Natural killer cell (primary cell): ENCODE measurements at regions of chr17 and their contacts with region 1.

Region 1: DNA sequence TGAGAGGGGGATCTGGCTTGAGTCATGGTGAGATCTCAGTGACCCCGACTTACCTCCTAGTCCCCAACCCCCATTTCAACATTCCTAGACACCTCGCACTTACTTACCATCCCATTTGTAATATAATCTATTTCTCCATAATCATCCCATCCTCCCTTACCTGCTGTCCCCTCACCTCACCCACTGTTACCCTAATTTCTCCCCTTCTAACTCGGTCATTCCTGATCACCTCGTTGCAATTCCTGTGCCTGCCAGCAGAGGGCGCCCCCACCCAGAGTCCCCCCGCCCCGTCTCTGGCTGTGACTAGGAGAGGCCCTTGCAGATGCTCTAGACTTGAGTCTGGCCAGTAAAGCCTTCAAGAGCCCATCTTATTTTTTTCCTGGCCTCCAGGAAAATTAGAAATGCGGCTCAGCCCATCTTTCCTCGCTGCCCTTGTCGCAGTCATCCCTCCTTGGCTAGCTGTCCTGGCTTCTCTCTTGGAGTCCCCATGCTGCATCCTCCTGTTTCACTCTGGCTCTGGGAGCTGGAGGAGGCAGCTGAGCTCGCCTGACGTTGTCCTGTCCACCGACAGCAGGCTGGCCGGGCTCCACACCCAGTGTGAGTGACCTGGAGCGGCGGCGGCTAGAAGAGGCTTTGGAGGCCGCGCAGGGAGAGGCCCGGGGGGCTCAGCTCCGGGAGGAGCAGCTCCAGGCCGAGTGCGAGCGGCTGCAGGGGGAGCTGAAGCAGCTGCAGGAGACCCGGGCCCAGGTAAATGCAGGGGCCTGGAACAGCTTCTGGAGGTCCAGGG is 5.0 kb downstream of the TBKBP1 start:
- DNase-seq: peak; percentile 79 to 84
- ATAC-seq: peak; percentile 32 to 67 (median 42)
- H3K4me3 ChIP-seq: peak overlapping the region; percentile 20
- H3K4me3 Mint-ChIP-seq: peak overlapping the region; percentile 94
- H3K27ac ChIP-seq: peak overlapping the region; percentile 53
- H3K27ac Mint-ChIP-seq: peak overlapping the region; percentile 98
- H3K4me1 ChIP-seq: peaks cover 89% of the 10 kb centered on the region
- H3K4me1 Mint-ChIP-seq: peaks cover 67 to 85% of the 10 kb centered on the region in 2 donors
- H3K27me3 ChIP-seq: no peaks in the 10 kb centered on the region
- H3K27me3 Mint-ChIP-seq: no peaks in the 10 kb centered on the region
- CTCF ChIP-seq: peak; percentile 93

Region 2: DNA sequence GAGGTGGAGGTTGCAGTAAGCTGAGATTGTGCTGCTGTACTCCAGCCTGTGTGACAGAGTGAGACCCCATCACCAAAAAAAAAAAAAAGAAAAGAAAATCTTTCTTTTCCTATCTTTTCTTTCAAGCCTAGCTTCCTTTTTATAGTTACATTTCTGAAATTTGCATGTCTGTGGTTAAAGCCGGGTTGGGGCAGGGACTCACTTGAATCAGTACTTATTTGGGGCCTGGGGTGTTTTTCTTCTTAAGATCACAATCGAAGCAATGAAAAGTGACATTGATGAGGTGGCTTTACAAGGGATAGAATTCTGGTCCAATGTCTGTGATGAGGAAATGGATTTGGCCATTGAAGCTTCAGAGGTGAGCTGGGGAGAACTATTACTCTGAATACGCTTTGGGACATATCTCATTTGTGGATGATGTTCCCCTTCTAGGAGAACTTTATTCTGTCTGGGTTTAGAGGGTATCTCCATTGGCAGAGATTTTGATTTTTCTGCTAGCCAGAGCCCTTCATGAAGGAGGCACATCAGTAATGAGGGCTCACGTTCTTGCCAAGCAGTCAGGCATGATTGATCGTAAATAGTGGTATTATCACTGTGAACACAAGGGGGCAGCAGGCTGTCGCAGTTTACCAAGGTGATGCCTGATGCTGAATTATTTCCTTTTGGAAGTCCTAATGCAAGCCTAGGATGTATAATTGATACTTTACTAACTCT is 34.9 kb before region 1 on chr17:
- intact Hi-C with region 1: loop called (anchors 5 kb)
- DNase-seq: peak; percentile 49 to 86
- ATAC-seq: peak; percentile 62 to 73 (median 65)
- H3K4me3 ChIP-seq: no peak overlapping the region
- H3K4me3 Mint-ChIP-seq: peak overlapping the region; percentile 4
- H3K27ac ChIP-seq: peak overlapping the region; percentile 31
- H3K27ac Mint-ChIP-seq: peak overlapping the region; percentile 64 to 80
- H3K4me1 ChIP-seq: peaks cover 12% of the 10 kb centered on the region
- H3K4me1 Mint-ChIP-seq: peaks cover 17 to 22% of the 10 kb centered on the region in 2 donors
- H3K27me3 ChIP-seq: no peaks in the 10 kb centered on the region
- H3K27me3 Mint-ChIP-seq: no peaks in the 10 kb centered on the region
- CTCF ChIP-seq: peak; percentile 90

Region 3: GRCh38 chr17:47713980-47714700 is 15.2 kb after region 1 on chr17:
- intact Hi-C with region 1: loop called (anchors 1 kb)
- DNase-seq: peak in 1 of 2 donors; percentile 67
- ATAC-seq: peak; percentile 31 to 57 (median 45)
- H3K4me3 ChIP-seq: peak overlapping the region; percentile 14
- H3K4me3 Mint-ChIP-seq: peak overlapping the region; percentile 89
- H3K27ac ChIP-seq: peak overlapping the region; percentile 81
- H3K27ac Mint-ChIP-seq: peak overlapping the region; percentile 89 to 93
- H3K4me1 ChIP-seq: peaks cover 98% of the 10 kb centered on the region
- H3K4me1 Mint-ChIP-seq: peaks cover 81 to 99% of the 10 kb centered on the region in 2 donors
- H3K27me3 ChIP-seq: no peaks in the 10 kb centered on the region
- H3K27me3 Mint-ChIP-seq: no peaks in the 10 kb centered on the region
- CTCF ChIP-seq: peak; percentile 32

Region 4: GRCh38 chr17:47733047-47733673 is 34.2 kb after region 1 on chr17 and contains the start of gene TBX21:
- intact Hi-C with region 1: loop called (anchors 2 kb)
- DNase-seq: peak; percentile 93 to 95
- ATAC-seq: peak; percentile 71 to 90 (median 82)
- H3K4me3 ChIP-seq: peak within 1 kb of the TSS; percentile 97
- H3K4me3 Mint-ChIP-seq: peak within 1 kb of the TSS; percentile 99
- H3K27ac ChIP-seq: peak within 1 kb of the TSS; percentile 83
- H3K27ac Mint-ChIP-seq: peak within 1 kb of the TSS; percentile 92 to 94
- H3K4me1 ChIP-seq: peaks cover 72% of the 10 kb centered on the region
- H3K4me1 Mint-ChIP-seq: peaks cover 67 to 71% of the 10 kb centered on the region in 2 donors
- H3K27me3 ChIP-seq: no peaks in the 10 kb centered on the region
- H3K27me3 Mint-ChIP-seq: no peaks in the 10 kb centered on the region
- CTCF ChIP-seq: peak; percentile 52
- total RNA-seq, gene TBX21: 234 to 328 (median 257) TPM

Region 5: DNA sequence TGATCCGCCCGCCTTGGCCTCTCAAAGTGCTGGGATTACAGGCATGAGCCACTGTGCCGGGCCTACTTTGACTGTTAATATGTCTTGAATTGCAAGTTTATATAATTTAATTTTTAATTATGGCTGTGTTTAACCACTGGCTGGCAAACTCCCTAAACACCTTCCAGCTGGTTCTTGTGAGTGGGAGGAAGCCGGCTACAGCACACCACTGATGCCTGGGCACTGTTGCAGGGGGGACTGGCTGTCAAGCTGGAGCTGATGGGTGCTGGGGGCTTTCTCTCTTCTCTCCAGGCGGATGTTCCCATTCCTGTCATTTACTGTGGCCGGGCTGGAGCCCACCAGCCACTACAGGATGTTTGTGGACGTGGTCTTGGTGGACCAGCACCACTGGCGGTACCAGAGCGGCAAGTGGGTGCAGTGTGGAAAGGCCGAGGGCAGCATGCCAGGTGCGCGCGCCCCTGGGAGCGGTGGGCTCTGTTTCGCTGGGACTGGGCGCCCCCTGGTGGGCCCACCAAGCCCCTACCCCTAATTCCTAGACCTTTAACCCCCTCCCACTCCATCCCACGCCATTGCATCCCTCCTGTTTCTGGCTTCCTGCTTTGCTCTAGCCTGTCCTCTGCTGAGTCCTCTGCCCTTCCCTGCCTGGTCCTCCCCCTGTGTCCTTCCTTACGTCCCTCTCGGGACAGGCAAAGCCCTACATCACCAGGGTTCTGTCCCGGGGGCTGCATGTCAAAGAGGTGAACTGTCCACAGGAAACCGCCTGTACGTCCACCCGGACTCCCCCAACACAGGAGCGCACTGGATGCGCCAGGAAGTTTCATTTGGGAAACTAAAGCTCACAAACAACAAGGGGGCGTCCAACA is 43.6 kb after region 1 on chr17:
- intact Hi-C with region 1: loop called (anchors 1 kb)
- DNase-seq: peak in 1 of 2 donors; percentile 73
- ATAC-seq: peak; percentile 5 to 30 (median 29)
- H3K4me3 ChIP-seq: peak overlapping the region; percentile 22
- H3K4me3 Mint-ChIP-seq: peak overlapping the region; percentile 99
- H3K27ac ChIP-seq: peak overlapping the region; percentile 75
- H3K27ac Mint-ChIP-seq: peak overlapping the region; percentile 85 to 94
- H3K4me1 ChIP-seq: peaks cover 88% of the 10 kb centered on the region
- H3K4me1 Mint-ChIP-seq: peaks cover 69 to 79% of the 10 kb centered on the region in 2 donors
- H3K27me3 ChIP-seq: no peaks in the 10 kb centered on the region
- H3K27me3 Mint-ChIP-seq: no peaks in the 10 kb centered on the region
- CTCF ChIP-seq: peak; percentile 48

Region 6: GRCh38 chr17:47776330-47777197 is 77.6 kb after region 1 on chr17:
- intact Hi-C with region 1: loop called (anchors 1 kb)
- DNase-seq: peak in 1 of 2 donors; percentile 78
- ATAC-seq: peak; percentile 74 to 98 (median 92)
- H3K4me3 ChIP-seq: no peak overlapping the region
- H3K4me3 Mint-ChIP-seq: no peak overlapping the region
- H3K27ac ChIP-seq: no peak overlapping the region
- H3K27ac Mint-ChIP-seq: no peak overlapping the region
- H3K4me1 ChIP-seq: peaks cover 3% of the 10 kb centered on the region
- H3K4me1 Mint-ChIP-seq: peaks cover 0 to 7% of the 10 kb centered on the region in 2 donors
- H3K27me3 ChIP-seq: peaks cover 4% of the 10 kb centered on the region
- H3K27me3 Mint-ChIP-seq: peaks cover 18 to 25% of the 10 kb centered on the region in 2 donors
- CTCF ChIP-seq: peak; percentile 77

Region 7: GRCh38 chr17:47789611-47790561 is 90.9 kb after region 1 on chr17:
- intact Hi-C with region 1: loop called (anchors 1 kb)
- DNase-seq: peak; percentile 52 to 74
- ATAC-seq: peak; percentile 88 to 99 (median 98)
- H3K4me3 ChIP-seq: peak overlapping the region; percentile 29
- H3K4me3 Mint-ChIP-seq: peak overlapping the region; percentile 84
- H3K27ac ChIP-seq: no peak overlapping the region
- H3K27ac Mint-ChIP-seq: no peak overlapping the region
- H3K4me1 ChIP-seq: peaks cover 8% of the 10 kb centered on the region
- H3K4me1 Mint-ChIP-seq: peaks cover 11 to 17% of the 10 kb centered on the region in 2 donors
- H3K27me3 ChIP-seq: peaks cover 27% of the 10 kb centered on the region
- H3K27me3 Mint-ChIP-seq: peaks cover 37 to 42% of the 10 kb centered on the region in 2 donors
- CTCF ChIP-seq: peak; percentile 72